ENCODE measurements at regions of chr16 and their contacts with region 1.

Region 1: GRCh38 chr16:57977418-57978069 is 6.6 kb upstream of the CNGB1 start:
- DNase-seq: no peak
- H3K4me3 ChIP-seq: no peak overlapping the region
- H3K27ac ChIP-seq: no peak overlapping the region
- H3K4me1 ChIP-seq: no peaks in the 10 kb centered on the region
- H3K27me3 ChIP-seq: no peaks in the 10 kb centered on the region
- CTCF ChIP-seq: no peak
- EP300 ChIP-seq: no peak
- POLR2A ChIP-seq: no peak

Region 2: GRCh38 chr16:57962756-57963155 is 14.8 kb before region 1 on chr16:
- in situ Hi-C with region 1: no loop called
- intact Hi-C with region 1: loop called (anchors 1 kb)
- DNase-seq: no peak
- H3K4me3 ChIP-seq: no peak overlapping the region
- H3K27ac ChIP-seq: no peak overlapping the region
- H3K4me1 ChIP-seq: no peaks in the 10 kb centered on the region
- H3K27me3 ChIP-seq: no peaks in the 10 kb centered on the region
- CTCF ChIP-seq: no peak
- EP300 ChIP-seq: no peak
- POLR2A ChIP-seq: no peak